Activated T-helper 1 cell treated with anti-CD3 and anti-CD28 coated beads, Interleukin-12 subunit alpha, Interleukin-12 subunit beta, Interleukin-2, Interleukin-4 antibody, amounts not matched to agents 30 ng/mL and 10 ng/mL and 1 ng/mL, durations not matched to agents 14 hours and 24 hours and 36 hours (primary cell): ENCODE measurements at regions of chr9 and their contacts with region 1.

Region 1: DNA sequence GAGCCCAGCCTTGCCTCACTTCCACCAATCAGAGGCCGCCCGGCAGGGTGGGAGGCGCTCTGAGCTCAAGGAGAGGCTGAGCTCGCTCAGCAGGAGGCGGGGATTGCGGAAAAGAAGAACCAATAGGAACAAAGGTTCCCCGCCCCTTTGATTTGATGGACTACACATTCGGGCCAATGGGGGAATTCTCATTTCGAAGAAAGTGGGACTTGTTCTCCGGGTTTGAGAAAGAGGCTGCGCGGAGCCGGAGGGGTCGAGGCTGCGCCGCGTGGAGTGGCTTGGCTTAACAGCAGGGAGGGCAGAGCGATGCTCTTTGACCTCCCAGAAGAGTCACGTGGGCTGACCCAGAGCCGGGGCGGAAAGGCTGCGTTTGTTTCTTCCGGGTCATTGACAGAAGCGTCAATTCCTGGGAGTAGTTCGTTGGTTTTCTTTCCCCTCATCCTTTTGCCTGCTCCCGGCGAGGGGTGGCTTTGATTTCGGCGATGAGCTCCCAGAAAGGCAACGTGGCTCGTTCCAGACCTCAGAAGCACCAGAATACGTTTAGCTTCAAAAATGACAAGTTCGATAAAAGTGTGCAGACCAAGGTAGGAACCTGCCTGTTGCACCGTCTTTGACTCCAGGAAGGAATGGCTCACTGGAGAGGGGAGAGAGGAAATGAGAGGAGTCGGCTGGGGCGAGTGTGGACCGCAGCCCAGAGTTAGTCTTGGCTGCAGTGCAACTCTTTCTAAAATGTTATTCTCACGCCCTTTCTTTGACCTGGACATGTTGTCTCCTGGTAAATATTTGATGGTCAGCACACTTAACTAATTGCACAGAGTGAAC is at the start of gene C9orf85:
- DNase-seq: peak; percentile 97
- H3K4me3 Mint-ChIP-seq: peak within 1 kb of the TSS; percentile 99
- H3K27ac Mint-ChIP-seq: peak within 1 kb of the TSS; percentile 96
- H3K4me1 Mint-ChIP-seq: peaks cover 64% of the 10 kb centered on the region
- H3K27me3 Mint-ChIP-seq: no peaks in the 10 kb centered on the region
- total RNA-seq, gene C9orf85: 9.3 and 9.8 TPM in 2 replicates

Region 2: DNA sequence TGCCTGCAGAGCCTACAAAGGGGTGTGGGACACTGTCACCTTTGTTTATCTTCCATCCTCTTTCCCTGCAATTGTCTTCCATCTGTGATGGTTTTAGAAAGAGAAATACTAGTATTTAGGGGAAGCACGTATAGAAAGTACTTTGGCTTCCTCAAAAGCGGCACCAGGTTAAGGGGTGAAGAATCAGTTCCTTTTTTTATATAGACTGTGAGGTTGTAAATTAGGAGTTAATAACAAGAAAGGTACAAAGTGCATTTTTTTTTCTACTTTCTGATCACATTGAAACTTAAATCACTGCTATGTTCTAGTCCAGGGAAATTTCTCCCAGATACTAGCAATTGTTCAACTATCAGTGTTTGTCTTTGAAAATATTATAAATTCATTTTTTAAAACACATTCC is 362.4 kb before region 1 on chr9:
- intact Hi-C with region 1: no loop called
- DNase-seq: no peak
- H3K4me3 Mint-ChIP-seq: no peak overlapping the region
- H3K27ac Mint-ChIP-seq: no peak overlapping the region
- H3K4me1 Mint-ChIP-seq: no peaks in the 10 kb centered on the region
- H3K27me3 Mint-ChIP-seq: peaks cover 33% of the 10 kb centered on the region

Region 3: DNA sequence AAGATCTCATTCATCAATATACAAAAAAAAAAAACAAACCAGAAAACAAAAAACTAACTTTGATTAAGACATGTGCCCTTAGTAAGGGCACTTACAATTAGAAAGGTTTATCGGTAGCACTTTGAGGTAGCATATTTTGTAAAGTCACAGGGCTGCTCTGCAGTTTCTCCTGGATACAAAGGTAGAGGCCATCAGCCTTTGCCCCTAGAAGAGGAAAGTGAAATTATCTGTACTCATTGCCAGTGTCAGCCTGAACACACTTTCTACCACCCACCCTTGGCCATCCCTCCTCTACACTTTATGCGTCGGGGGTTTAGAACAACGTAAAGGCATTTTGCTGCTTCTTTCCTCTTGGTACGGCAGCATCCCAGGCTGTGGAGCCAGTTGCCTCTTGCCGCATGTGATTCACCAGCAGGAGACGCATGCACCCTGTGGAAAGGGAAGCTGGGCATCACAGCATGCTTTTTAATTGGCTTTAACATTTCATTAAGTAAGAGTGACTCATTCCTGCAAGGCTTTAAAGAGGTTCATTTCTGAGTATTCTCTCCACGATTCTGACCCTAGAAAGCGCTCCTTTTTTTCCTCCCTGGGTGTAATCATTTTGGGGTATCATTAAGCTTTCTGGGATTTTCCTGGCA is 227.7 kb before region 1 on chr9:
- intact Hi-C with region 1: loop called (anchors 10 kb)
- DNase-seq: no peak
- H3K4me3 Mint-ChIP-seq: peak overlapping the region; percentile 72
- H3K27ac Mint-ChIP-seq: peak overlapping the region; percentile 68
- H3K4me1 Mint-ChIP-seq: peaks cover 60% of the 10 kb centered on the region
- H3K27me3 Mint-ChIP-seq: no peaks in the 10 kb centered on the region

Region 4: GRCh38 chr9:71806901-71807307 is 104.6 kb before region 1 on chr9:
- intact Hi-C with region 1: loop called (anchors 1 kb)
- DNase-seq: peak; percentile 48
- H3K4me3 Mint-ChIP-seq: no peak overlapping the region
- H3K27ac Mint-ChIP-seq: no peak overlapping the region
- H3K4me1 Mint-ChIP-seq: peaks cover 4% of the 10 kb centered on the region
- H3K27me3 Mint-ChIP-seq: no peaks in the 10 kb centered on the region

Region 5: GRCh38 chr9:71830929-71831328 is 80.5 kb before region 1 on chr9:
- intact Hi-C with region 1: no loop called
- DNase-seq: no peak
- H3K4me3 Mint-ChIP-seq: no peak overlapping the region
- H3K27ac Mint-ChIP-seq: no peak overlapping the region
- H3K4me1 Mint-ChIP-seq: no peaks in the 10 kb centered on the region
- H3K27me3 Mint-ChIP-seq: peaks cover 28% of the 10 kb centered on the region

Region 6: GRCh38 chr9:71878327-71879274 is 32.9 kb before region 1 on chr9:
- intact Hi-C with region 1: loop called (anchors 2 kb)
- DNase-seq: no peak
- H3K4me3 Mint-ChIP-seq: no peak overlapping the region
- H3K27ac Mint-ChIP-seq: no peak overlapping the region
- H3K4me1 Mint-ChIP-seq: peaks cover 15% of the 10 kb centered on the region
- H3K27me3 Mint-ChIP-seq: no peaks in the 10 kb centered on the region

Region 7: DNA sequence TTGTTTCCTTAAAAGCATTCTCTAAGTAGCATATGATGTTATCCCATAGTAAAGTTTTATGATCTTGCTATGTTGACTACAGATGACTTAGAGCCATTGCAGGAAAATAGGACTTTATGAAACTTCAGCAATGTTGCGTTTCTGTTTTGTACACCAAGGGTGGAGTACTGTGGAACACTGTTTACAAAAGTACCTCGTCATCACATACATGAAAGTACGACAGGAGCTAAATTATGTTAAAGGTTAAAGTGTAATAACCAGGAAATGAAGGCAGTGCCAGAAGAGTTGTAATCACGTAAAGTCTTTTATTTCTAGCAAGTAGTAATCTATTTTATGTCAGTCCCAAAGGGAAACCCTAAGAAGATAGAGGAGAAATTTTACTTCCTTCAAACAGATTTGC is 50.9 kb after region 1 on chr9:
- intact Hi-C with region 1: loop called (anchors 5 kb)
- DNase-seq: no peak
- H3K4me3 Mint-ChIP-seq: no peak overlapping the region
- H3K27ac Mint-ChIP-seq: no peak overlapping the region
- H3K4me1 Mint-ChIP-seq: no peaks in the 10 kb centered on the region
- H3K27me3 Mint-ChIP-seq: no peaks in the 10 kb centered on the region

Region 8: DNA sequence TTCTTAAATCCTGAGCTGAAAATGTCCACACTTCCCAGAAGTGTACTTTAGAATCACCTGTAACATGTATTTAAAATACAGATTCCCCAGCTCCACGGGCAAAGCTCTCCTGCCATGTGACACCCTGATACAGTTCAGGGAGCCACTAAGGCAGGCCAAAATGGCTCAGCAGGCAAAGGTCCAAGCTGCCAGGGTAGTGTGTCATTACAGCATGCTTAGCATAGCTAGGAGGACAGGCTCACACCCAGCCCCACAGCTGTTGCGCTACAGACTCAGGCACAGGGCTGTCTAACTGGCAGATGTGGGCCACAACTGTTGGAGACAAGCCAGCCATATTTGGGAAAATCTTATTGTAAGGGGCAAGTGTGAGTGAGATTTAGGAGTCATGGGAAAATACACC is 72.9 kb after region 1 on chr9:
- intact Hi-C with region 1: no loop called
- DNase-seq: no peak
- H3K4me3 Mint-ChIP-seq: no peak overlapping the region
- H3K27ac Mint-ChIP-seq: no peak overlapping the region
- H3K4me1 Mint-ChIP-seq: no peaks in the 10 kb centered on the region
- H3K27me3 Mint-ChIP-seq: no peaks in the 10 kb centered on the region

Region 9: DNA sequence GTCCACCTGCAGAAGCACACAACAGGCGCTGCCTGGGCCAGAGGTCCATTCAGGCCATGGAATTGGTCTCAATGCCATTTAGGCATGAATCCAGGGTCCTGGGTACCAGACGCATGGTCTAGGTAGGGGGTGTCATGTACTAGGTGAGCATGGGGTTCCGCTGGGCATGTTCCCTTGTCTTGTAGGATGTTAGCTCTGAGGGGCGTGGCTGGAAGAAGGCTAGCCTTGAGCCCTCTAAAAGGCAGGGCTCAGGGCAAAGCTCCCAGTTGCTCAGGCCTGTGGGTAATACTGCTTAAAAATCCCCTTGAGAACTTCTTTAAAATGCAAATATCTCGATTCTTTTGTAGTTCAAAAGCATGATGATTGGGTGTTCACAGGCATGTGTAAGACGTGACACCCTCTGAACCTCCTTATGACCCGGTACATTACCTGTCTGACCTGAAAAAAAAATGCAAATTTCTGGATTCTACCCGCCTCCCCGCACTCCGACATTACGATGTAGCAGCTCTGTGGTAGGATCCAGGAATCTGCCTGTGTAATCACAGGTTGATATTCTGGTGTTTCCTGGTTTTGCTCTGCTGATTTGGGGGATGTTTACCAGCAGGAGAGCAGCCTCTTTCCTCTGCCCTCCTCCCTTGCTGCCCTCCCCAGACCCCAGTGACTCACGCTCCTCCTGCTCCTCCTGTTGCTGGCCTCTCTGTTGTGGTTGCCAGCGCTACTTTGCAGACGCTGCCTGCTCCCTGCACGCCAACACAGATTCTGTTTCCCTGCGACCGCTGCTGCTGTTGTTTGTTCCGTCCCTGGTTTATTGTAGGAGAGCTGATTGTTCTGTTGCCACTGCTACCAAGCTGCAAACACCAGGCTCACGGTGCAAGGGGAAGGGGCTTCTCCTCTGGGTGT is 615.7 kb after region 1 on chr9:
- intact Hi-C with region 1: loop called (anchors 5 kb)
- DNase-seq: peak; percentile 75
- H3K4me3 Mint-ChIP-seq: peak overlapping the region; percentile 69
- H3K27ac Mint-ChIP-seq: peak overlapping the region; percentile 95
- H3K4me1 Mint-ChIP-seq: peaks cover 66% of the 10 kb centered on the region
- H3K27me3 Mint-ChIP-seq: no peaks in the 10 kb centered on the region